ENCODE measurements at regions of chr17 and their contacts with region 1.

Region 1: GRCh38 chr17:38982858-38983746 is 15.9 kb upstream of the FBXO47 start:
- DNase-seq: peak; percentile 74
- H3K4me3 ChIP-seq: no peak overlapping the region
- H3K27ac ChIP-seq: no peak overlapping the region
- H3K4me1 ChIP-seq: no peaks in the 10 kb centered on the region
- H3K27me3 ChIP-seq: no peaks in the 10 kb centered on the region
- CTCF ChIP-seq: peak; percentile 62 to 63
- POLR2A ChIP-seq: no peak

Region 2: DNA sequence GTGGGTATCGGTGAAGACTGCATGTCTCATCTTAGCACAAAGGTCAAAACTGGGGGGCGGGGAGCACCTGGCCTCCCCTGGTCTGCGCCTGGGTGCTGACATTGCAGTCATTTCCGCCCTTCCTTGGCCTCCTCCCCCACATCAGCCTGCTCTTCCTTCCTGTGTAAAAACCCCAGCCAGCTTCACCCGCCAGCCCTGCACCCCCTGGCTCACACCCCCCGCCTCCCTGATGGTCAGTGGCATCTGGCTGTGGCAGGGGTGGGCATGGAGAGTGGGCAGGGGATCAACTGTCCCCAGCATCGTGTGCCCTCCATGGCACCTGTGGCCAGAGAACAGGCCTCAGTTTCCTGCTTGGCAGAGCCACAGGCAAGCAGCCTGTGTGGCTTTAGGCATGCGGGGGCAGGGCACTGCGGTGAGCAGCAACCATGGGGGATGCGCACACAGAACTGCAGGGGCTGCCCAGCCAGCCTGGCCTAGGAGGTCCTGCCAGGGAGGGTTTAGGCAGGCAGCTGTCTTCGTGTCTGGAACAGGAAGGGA is 84.2 kb before region 1 on chr17:
- CTCF ChIA-PET with region 1: interaction called, 11 read pairs
- POLR2A ChIA-PET with region 1: no interaction called
- dilution Hi-C with region 1: no loop called
- intact Hi-C with region 1: no loop called
- DNase-seq: peak; percentile 41
- H3K4me3 ChIP-seq: no peak overlapping the region
- H3K27ac ChIP-seq: peak overlapping the region; percentile 51
- H3K4me1 ChIP-seq: peaks cover 60% of the 10 kb centered on the region
- H3K27me3 ChIP-seq: no peaks in the 10 kb centered on the region
- CTCF ChIP-seq: no peak
- POLR2A ChIP-seq: no peak

Region 3: GRCh38 chr17:38958756-38959155 is 24.3 kb before region 1 on chr17:
- CTCF ChIA-PET with region 1: interaction called, 14 read pairs
- POLR2A ChIA-PET with region 1: no interaction called
- dilution Hi-C with region 1: no loop called
- intact Hi-C with region 1: no loop called
- DNase-seq: no peak
- H3K4me3 ChIP-seq: no peak overlapping the region
- H3K27ac ChIP-seq: peak overlapping the region; percentile 51
- H3K4me1 ChIP-seq: peaks cover 20% of the 10 kb centered on the region
- H3K27me3 ChIP-seq: no peaks in the 10 kb centered on the region
- CTCF ChIP-seq: no peak
- POLR2A ChIP-seq: no peak

Region 4: GRCh38 chr17:39009581-39010001 is 26.5 kb after region 1 on chr17:
- CTCF ChIA-PET with region 1: interaction called, 11 read pairs
- POLR2A ChIA-PET with region 1: no interaction called
- dilution Hi-C with region 1: no loop called
- intact Hi-C with region 1: no loop called
- DNase-seq: no peak
- H3K4me3 ChIP-seq: no peak overlapping the region
- H3K27ac ChIP-seq: no peak overlapping the region
- H3K4me1 ChIP-seq: peaks cover 6% of the 10 kb centered on the region
- H3K27me3 ChIP-seq: peaks cover 2% of the 10 kb centered on the region in 2 experiments
- CTCF ChIP-seq: no peak
- POLR2A ChIP-seq: no peak

Region 5: DNA sequence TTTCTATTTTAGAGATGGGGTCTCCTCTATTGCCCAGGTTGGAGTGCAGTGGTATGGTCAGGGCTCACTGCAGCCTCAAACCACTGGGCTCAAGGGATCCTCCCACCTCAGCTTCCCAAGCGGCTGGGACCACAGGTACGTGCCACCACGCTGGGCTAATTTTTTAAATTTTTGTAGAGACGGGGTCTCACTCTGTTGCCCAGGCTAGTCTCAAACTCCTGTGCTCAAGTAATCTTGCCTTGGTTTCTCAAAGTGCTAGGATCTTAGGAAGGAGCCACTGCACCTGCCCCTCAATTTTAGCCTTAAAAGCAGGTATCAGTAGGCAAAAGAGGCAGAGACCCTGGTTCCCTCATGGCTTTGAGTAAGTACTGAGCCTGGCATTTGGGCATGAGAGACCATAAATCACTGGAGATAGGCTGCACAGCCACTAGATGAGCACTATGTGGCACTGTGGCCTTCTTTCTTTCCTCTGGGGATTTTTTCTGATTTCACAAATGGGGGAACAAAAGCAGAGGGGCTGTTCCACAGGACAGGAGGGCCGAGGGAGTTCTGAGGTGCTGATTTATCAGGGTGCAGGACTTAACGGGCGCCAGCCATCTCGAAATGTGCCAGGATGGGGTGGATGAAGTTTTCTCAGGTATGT is 86.1 kb after region 1 on chr17:
- CTCF ChIA-PET with region 1: interaction called, 17 read pairs
- POLR2A ChIA-PET with region 1: no interaction called
- dilution Hi-C with region 1: no loop called
- intact Hi-C with region 1: loop called (anchors 2 kb)
- DNase-seq: peak; percentile 19
- H3K4me3 ChIP-seq: no peak overlapping the region
- H3K27ac ChIP-seq: no peak overlapping the region
- H3K4me1 ChIP-seq: no peaks in the 10 kb centered on the region
- H3K27me3 ChIP-seq: peaks cover 9 to 13% of the 10 kb centered on the region in 2 experiments
- CTCF ChIP-seq: peak; percentile 45 to 61
- POLR2A ChIP-seq: no peak

Region 6: DNA sequence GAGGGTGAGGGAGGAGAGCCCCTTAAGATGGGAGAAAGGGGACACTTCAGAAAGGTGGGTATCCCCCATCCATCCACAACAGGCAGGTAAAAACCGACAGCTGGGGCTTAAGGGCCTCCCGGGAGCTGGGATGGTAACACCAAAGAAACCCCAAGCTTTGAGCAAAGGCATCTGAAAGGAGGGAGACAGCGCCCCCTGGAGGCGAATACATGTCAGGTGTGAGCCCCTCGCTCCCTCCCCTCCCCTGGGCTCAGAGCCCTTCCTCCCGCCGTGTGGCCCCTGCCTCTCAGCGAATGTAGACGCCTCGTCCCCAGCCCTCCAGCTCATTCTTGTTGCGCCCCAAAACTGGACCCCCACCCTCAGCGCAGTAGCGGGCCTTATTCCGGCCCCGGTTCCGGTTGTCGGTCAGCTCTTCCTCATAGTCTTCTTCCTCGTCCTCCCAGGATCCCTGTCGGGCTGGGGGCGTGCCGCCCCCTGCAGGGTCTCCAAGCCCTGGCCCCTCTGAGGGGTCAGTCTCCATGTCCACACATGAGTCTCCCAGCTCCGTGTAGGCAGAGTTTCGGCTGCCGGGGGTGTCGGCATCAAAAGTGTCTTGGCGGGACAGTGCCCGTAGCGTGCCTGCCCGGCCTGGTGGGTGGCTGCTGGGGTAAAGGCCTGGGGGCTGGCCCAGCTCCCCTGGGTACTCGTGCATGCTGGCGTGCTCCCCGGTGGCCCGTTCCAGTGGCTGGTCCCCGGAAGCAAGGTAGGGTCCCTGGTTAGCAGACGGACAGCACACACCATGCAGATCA is 192.0 kb after region 1 on chr17:
- CTCF ChIA-PET with region 1: interaction called, 130 read pairs
- POLR2A ChIA-PET with region 1: no interaction called
- dilution Hi-C with region 1: no loop called
- intact Hi-C with region 1: no loop called
- DNase-seq: peak; percentile 44
- H3K4me3 ChIP-seq: no peak overlapping the region
- H3K27ac ChIP-seq: no peak overlapping the region
- H3K4me1 ChIP-seq: peaks cover 12% of the 10 kb centered on the region
- H3K27me3 ChIP-seq: no peaks in the 10 kb centered on the region
- CTCF ChIP-seq: peak; percentile 67 to 91
- POLR2A ChIP-seq: no peak

Region 7: DNA sequence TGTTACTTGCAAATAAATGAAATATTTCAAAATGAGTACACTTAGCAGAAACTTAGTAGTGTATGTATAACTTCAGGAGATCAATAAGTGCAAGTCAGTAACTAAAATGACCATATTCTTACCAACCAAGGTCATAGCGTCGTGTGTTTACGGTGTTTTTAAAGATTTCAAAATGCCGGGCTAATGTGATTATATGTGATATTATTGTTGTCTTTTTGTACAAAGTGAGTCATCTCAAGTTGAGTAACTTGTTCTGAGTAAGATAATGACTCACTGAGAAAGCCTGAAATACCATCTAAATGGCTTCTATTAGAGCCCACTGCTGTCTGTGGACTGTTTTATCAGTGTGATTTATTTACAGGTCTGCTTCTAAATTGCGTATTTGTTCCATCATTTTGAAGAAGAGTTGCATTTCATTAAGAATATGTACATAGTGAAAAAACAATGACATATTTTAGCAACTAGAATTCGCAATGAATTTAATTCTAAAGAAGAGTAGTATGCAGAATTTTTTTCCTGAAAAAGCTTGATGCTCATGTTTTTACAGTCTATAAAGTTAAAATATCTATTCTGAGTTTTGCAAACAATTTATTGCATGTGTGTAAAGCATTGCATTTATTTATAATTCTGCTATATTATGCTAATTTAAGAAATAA is 1871.2 kb after region 1 on chr17:
- CTCF ChIA-PET with region 1: no interaction called
- POLR2A ChIA-PET with region 1: no interaction called
- dilution Hi-C with region 1: no loop called
- intact Hi-C with region 1: no loop called
- DNase-seq: peak; percentile 59
- H3K4me3 ChIP-seq: no peak overlapping the region
- H3K27ac ChIP-seq: no peak overlapping the region
- H3K4me1 ChIP-seq: peaks cover 8% of the 10 kb centered on the region
- H3K27me3 ChIP-seq: peaks cover 2 to 5% of the 10 kb centered on the region in 2 experiments
- CTCF ChIP-seq: no peak
- POLR2A ChIP-seq: no peak

Measured in endothelial cell of umbilical vein (primary cell).